Activated CD4-positive, alpha-beta T cell treated with anti-CD3 and anti-CD28 coated beads for 36 hours (primary cell): ENCODE measurements at regions of chr3 and their contacts with region 1.

Region 1: GRCh38 chr3:53160660-53161449 is at the start of gene PRKCD:
- DNase-seq: peak; percentile 91
- ATAC-seq: peak; percentile 75
- H3K4me3 Mint-ChIP-seq: peak within 1 kb of the TSS; percentile 75
- H3K27ac Mint-ChIP-seq: peak within 1 kb of the TSS; percentile 83
- H3K4me1 Mint-ChIP-seq: peaks cover 19% of the 10 kb centered on the region
- H3K27me3 Mint-ChIP-seq: peaks cover 10% of the 10 kb centered on the region
- total RNA-seq, gene PRKCD: 22.0 to 26.5 TPM

Region 2: DNA sequence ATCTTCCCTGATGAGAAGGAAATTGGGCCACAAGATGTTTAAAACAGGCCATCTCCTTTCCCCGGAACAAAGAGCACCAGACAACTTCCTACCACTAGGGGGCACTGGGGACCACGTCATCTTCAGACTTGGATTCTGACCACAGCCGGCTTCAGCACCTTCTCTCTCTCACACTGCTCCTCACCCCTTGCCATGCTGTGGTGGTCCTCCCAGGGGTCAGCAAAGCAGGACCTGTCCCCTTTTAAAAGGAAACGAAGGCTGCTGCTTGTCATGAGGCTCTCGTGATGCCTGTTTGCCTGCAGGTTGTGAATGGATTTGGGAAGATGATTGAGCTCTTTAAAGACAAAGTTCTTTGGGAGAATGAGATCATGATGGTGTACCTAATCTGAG is 46.8 kb before region 1 on chr3:
- CTCF ChIA-PET with region 1: interaction called, 17 read pairs
- POLR2A ChIA-PET with region 1: interaction called, 3 read pairs
- intact Hi-C with region 1: loop called (anchors 1 to 5 kb)
- DNase-seq: peak; percentile 91
- ATAC-seq: peak; percentile 49
- H3K4me3 Mint-ChIP-seq: no peak overlapping the region
- H3K27ac Mint-ChIP-seq: no peak overlapping the region
- H3K4me1 Mint-ChIP-seq: peaks cover 15% of the 10 kb centered on the region
- H3K27me3 Mint-ChIP-seq: no peaks in the 10 kb centered on the region